ENCODE measurements at regions of chr19 and their contacts with region 1.

Region 1: DNA sequence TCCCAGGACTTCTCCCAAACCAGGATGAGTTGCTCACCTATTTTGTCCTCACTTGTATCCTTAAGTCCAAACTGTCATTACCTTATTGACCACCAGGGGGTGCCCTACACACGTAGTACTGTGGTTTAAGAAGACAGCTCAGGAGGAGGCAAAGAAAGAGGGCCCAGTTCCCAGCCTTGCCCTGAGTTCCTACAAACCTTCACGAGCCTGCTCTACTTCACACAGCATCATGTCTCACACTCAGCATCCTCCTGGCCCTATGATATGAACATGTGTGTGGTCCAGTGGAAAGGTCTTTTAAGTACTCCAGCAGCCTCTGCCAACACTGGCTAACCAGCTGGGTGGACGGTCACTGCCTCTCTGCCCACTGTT is 8.1 kb upstream of the ZNF784 start:
- DNase-seq: peak; percentile 62 to 95 (median 87)
- ATAC-seq: peak; percentile 43
- H3K4me3 ChIP-seq: no peak overlapping the region
- H3K4me3 Mint-ChIP-seq: peak overlapping the region; percentile 83
- H3K27ac ChIP-seq: no peak overlapping the region
- H3K27ac Mint-ChIP-seq: peak overlapping the region; percentile 55
- H3K4me1 ChIP-seq: peaks cover 49% of the 10 kb centered on the region
- H3K4me1 Mint-ChIP-seq: peaks cover 45% of the 10 kb centered on the region
- H3K27me3 ChIP-seq: no peaks in the 10 kb centered on the region
- H3K27me3 Mint-ChIP-seq: no peaks in the 10 kb centered on the region
- CTCF ChIP-seq: peak; percentile 65

Region 2: DNA sequence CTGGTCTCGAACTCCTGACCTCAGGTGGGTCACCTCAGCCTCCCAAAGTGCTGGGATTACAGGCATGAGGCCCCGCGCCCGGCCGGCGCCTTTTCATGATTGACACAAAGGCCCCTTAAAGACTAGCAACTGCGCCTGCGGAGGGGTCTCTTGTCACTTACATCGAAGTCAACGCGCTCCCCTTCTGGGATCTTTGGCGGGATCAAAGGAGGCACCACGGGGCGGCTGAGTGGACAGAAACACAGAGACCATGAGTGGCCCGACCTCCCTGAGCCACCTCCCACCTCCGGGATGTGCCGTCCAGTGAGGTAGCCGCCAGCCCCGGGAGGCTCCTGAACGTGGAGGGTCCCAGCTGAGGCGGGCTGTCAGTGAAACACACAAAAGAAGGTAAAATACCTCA is 490.8 kb before region 1 on chr19:
- CTCF ChIA-PET with region 1: no interaction called
- POLR2A ChIA-PET with region 1: no interaction called
- intact Hi-C with region 1: loop called in 1 of 2 experiments (anchors 5 kb)
- DNase-seq: no peak
- ATAC-seq: no peak
- H3K4me3 ChIP-seq: no peak overlapping the region
- H3K4me3 Mint-ChIP-seq: no peak overlapping the region
- H3K27ac ChIP-seq: no peak overlapping the region
- H3K27ac Mint-ChIP-seq: no peak overlapping the region
- H3K4me1 ChIP-seq: peaks cover 20% of the 10 kb centered on the region
- H3K4me1 Mint-ChIP-seq: peaks cover 5% of the 10 kb centered on the region
- H3K27me3 ChIP-seq: peaks cover 50 to 58% of the 10 kb centered on the region in 2 experiments
- H3K27me3 Mint-ChIP-seq: peaks cover 59% of the 10 kb centered on the region
- CTCF ChIP-seq: no peak

Region 3: GRCh38 chr19:55242089-55242916 is 390.1 kb before region 1 on chr19:
- CTCF ChIA-PET with region 1: no interaction called
- POLR2A ChIA-PET with region 1: no interaction called
- intact Hi-C with region 1: no loop called
- DNase-seq: no peak
- ATAC-seq: no peak
- H3K4me3 ChIP-seq: no peak overlapping the region
- H3K4me3 Mint-ChIP-seq: no peak overlapping the region
- H3K27ac ChIP-seq: no peak overlapping the region
- H3K27ac Mint-ChIP-seq: no peak overlapping the region
- H3K4me1 ChIP-seq: peaks cover 8% of the 10 kb centered on the region
- H3K4me1 Mint-ChIP-seq: no peaks in the 10 kb centered on the region
- H3K27me3 ChIP-seq: no peaks in the 10 kb centered on the region
- H3K27me3 Mint-ChIP-seq: no peaks in the 10 kb centered on the region
- CTCF ChIP-seq: no peak

Region 4: DNA sequence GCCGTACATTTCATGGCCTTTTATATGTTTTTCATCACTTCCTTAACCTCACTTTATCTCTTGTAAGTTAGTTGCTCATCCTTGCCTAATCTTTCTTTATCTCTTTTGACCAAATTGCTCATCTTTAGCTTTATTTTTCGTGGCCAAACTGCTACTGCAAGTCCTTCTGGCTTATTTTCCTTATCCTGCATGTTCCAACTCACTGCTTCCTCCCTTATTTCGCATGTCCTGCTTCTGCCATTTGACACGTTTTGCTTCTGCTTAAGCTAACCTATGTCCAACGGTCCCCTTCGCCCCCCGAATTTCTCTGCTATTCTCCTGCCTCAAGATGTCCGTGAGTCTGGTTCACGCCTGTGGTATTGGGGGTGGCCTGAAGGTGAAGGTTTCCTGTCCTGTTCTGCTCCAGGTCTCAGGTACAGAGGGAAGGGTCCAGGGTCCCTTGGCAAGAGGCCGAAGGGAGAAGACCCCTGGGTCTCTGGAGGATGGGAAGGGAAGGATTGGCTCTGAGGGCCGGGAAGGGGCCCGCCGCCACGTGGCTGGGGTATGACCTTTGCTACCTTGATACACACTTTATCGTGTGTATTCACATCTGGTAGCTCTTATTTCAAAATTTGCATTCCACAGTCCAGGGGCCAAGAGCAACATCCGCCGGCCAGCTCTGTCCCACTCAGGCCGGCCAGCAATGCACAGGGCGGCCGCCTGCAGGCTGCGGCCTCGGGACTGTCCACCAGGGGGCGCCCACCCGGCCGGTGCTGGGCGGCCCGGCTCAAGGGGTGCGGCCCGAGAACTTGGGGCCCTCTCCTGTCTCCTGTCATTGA is 165.0 kb before region 1 on chr19:
- CTCF ChIA-PET with region 1: interaction called, 3 read pairs
- POLR2A ChIA-PET with region 1: interaction called, 3 read pairs
- intact Hi-C with region 1: loop called in 1 of 2 experiments (anchors 5 kb)
- DNase-seq: peak; percentile 30 to 82 (median 58)
- ATAC-seq: peak; percentile 93
- H3K4me3 ChIP-seq: no peak overlapping the region
- H3K4me3 Mint-ChIP-seq: no peak overlapping the region
- H3K27ac ChIP-seq: no peak overlapping the region
- H3K27ac Mint-ChIP-seq: no peak overlapping the region
- H3K4me1 ChIP-seq: peaks cover 11% of the 10 kb centered on the region
- H3K4me1 Mint-ChIP-seq: no peaks in the 10 kb centered on the region
- H3K27me3 ChIP-seq: no peaks in the 10 kb centered on the region
- H3K27me3 Mint-ChIP-seq: no peaks in the 10 kb centered on the region
- CTCF ChIP-seq: peak; percentile 97

Region 5: GRCh38 chr19:55516878-55517620 is 115.4 kb before region 1 on chr19:
- CTCF ChIA-PET with region 1: interaction called, 9 read pairs
- POLR2A ChIA-PET with region 1: interaction called, 4 read pairs
- intact Hi-C with region 1: loop called (anchors 1 kb)
- DNase-seq: peak; percentile 82 to 95 (median 88)
- ATAC-seq: peak; percentile 100
- H3K4me3 ChIP-seq: peak overlapping the region; percentile 32
- H3K4me3 Mint-ChIP-seq: peak overlapping the region; percentile 74
- H3K27ac ChIP-seq: peak overlapping the region in 1 of 2 donors; percentile 37
- H3K27ac Mint-ChIP-seq: peak overlapping the region; percentile 73
- H3K4me1 ChIP-seq: peaks cover 11% of the 10 kb centered on the region
- H3K4me1 Mint-ChIP-seq: peaks cover 4% of the 10 kb centered on the region
- H3K27me3 ChIP-seq: no peaks in the 10 kb centered on the region
- H3K27me3 Mint-ChIP-seq: no peaks in the 10 kb centered on the region
- CTCF ChIP-seq: peak; percentile 78

Region 6: DNA sequence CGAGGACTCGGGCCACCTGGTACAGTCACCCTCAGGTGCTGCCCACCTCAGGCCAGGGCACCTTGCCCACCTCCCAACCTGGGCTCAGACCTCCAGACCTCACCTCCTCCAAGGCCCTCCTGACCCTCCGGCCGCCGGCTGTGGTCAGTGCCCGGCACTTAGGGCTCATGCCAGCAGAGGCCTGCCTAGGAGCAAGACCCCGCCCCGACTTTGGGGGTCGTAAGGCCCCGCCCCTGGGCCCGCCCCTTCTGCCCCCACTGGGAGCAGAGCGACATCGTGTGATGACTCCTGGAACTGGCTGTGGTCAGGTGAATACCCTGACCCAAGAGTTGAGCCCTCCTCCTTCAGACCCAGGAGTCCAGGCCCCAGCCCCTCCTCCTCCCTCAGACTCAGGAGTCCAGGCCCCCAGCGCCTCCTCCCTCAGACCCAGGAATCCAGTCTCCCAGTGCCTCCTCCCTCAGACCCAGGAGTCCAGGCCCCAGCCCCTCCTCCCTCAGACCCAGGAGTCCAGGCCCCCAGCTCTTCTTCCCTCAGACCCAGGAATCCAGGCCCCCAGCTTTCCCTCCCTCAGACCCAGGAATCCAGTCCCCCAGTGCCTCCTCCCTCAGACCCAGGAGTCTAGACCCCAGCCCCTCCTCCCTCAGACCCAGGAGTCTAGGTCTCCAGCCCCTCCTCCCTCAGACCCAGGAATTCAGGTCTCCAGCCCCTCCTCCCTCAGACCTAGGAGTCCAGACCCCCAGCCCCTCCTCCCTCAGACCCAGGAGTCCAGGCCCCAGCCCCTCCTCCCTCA is 95.3 kb before region 1 on chr19 and contains the start of gene SBK2:
- CTCF ChIA-PET with region 1: no interaction called
- POLR2A ChIA-PET with region 1: no interaction called
- intact Hi-C with region 1: no loop called
- DNase-seq: no peak
- ATAC-seq: no peak
- H3K4me3 ChIP-seq: no peak within 1 kb of the TSS
- H3K4me3 Mint-ChIP-seq: no peak within 1 kb of the TSS
- H3K27ac ChIP-seq: no peak within 1 kb of the TSS
- H3K27ac Mint-ChIP-seq: no peak within 1 kb of the TSS
- H3K4me1 ChIP-seq: no peaks in the 10 kb centered on the region
- H3K4me1 Mint-ChIP-seq: no peaks in the 10 kb centered on the region
- H3K27me3 ChIP-seq: no peaks in the 10 kb centered on the region
- H3K27me3 Mint-ChIP-seq: no peaks in the 10 kb centered on the region
- CTCF ChIP-seq: no peak
- total RNA-seq, gene SBK2: not detected

Region 7: GRCh38 chr19:55599468-55600279 is 32.8 kb before region 1 on chr19 and contains the start of gene FIZ1:
- CTCF ChIA-PET with region 1: interaction called, 48 read pairs
- POLR2A ChIA-PET with region 1: interaction called, 22 read pairs
- intact Hi-C with region 1: no loop called
- DNase-seq: peak; percentile 89 to 98 (median 94)
- ATAC-seq: peak; percentile 71
- H3K4me3 ChIP-seq: peak within 1 kb of the TSS; percentile 95
- H3K4me3 Mint-ChIP-seq: peak within 1 kb of the TSS; percentile 99
- H3K27ac ChIP-seq: peak within 1 kb of the TSS; percentile 95 to 97
- H3K27ac Mint-ChIP-seq: peak within 1 kb of the TSS; percentile 95
- H3K4me1 ChIP-seq: peaks cover 36% of the 10 kb centered on the region
- H3K4me1 Mint-ChIP-seq: peaks cover 26% of the 10 kb centered on the region
- H3K27me3 ChIP-seq: no peaks in the 10 kb centered on the region
- H3K27me3 Mint-ChIP-seq: no peaks in the 10 kb centered on the region
- CTCF ChIP-seq: no peak
- total RNA-seq, gene FIZ1: 5.5 to 7.3 TPM

Region 8: DNA sequence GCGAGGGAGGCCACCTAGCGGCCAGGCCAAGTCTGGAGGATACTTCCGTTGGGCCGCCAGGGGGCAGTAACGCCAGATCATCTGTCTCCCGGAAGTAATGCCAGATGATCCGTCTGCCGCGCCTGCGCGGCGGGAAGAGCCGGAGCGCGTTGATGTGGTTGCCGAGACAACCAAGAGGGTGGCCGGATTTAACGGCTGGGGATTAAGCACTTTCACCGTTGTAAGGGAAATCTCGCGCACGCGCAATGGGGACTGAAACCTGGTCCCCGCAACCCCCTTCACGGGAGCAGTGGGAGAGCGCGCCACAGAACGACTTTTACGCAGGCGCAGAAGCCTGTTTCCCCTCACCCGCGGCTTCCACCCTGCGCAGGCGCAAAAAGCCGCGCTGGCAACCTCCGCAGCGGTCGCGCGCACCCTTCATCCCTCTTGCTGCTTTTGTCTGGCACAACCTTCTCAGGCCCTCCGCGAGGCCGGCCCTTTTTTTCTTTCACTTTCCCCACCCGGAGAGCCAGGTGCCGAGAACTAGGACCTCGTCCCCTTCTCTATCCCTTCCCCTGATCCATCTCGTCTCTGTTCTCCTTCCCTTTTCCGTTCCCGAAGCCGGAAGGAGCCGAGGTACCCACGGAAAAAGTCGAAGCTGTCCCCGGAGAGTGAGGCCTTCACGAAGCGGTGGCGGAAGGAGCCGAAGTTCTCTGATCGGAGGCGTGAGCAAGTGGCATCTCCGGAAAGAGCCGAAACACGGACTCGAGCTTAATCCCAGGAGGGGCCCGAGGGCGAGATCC is 21.5 kb after region 1 on chr19:
- CTCF ChIA-PET with region 1: interaction called, 29 read pairs
- POLR2A ChIA-PET with region 1: interaction called, 43 read pairs
- intact Hi-C with region 1: loop called in 1 of 2 experiments (anchors 1 kb)
- DNase-seq: peak; percentile 98 to 100 (median 100)
- ATAC-seq: peak; percentile 79
- H3K4me3 ChIP-seq: peak overlapping the region; percentile 70
- H3K4me3 Mint-ChIP-seq: peak overlapping the region; percentile 94
- H3K27ac ChIP-seq: peak overlapping the region; percentile 96 to 100
- H3K27ac Mint-ChIP-seq: peak overlapping the region; percentile 93
- H3K4me1 ChIP-seq: peaks cover 46% of the 10 kb centered on the region
- H3K4me1 Mint-ChIP-seq: peaks cover 43% of the 10 kb centered on the region
- H3K27me3 ChIP-seq: no peaks in the 10 kb centered on the region
- H3K27me3 Mint-ChIP-seq: no peaks in the 10 kb centered on the region
- CTCF ChIP-seq: peak; percentile 100

Region 9: DNA sequence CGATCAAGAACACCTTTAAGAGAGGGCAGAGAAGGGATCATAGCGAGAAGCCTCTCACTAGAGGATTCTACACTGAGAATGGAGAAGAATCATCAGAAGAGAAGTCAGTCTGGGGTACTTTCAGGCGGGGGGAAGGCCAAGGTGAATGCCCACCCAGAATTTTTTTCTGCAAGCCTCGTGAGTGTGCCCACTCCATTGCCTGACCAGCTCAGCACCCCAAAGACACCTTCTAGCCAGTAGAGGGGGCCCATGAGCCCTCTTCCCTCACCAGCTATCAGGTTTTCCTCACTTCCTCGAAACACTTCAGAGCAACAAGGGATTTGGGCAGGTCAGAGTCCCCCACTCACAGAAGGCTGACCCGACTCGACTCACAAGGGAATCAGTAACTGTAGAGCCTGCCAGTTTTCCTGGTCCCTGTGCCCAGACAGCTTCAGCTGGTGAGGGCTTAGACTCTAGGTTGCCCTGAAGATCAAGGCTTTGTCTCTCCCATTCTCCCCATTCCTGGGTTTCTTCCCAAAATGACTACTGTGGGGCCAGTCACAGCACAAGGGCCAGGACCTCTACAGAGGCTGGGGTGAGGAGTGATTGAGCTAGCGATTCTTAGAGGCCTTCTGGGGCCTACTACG is 281.3 kb after region 1 on chr19:
- CTCF ChIA-PET with region 1: no interaction called
- POLR2A ChIA-PET with region 1: no interaction called
- intact Hi-C with region 1: no loop called
- DNase-seq: no peak
- ATAC-seq: no peak
- H3K4me3 ChIP-seq: no peak overlapping the region
- H3K4me3 Mint-ChIP-seq: no peak overlapping the region
- H3K27ac ChIP-seq: no peak overlapping the region
- H3K27ac Mint-ChIP-seq: no peak overlapping the region
- H3K4me1 ChIP-seq: no peaks in the 10 kb centered on the region
- H3K4me1 Mint-ChIP-seq: no peaks in the 10 kb centered on the region
- H3K27me3 ChIP-seq: peaks cover 0 to 4% of the 10 kb centered on the region in 2 experiments
- H3K27me3 Mint-ChIP-seq: peaks cover 9% of the 10 kb centered on the region
- CTCF ChIP-seq: no peak

Measured in CD4-positive, alpha-beta T cell (primary cell).